ENCODE measurements at regions of chr6 and their contacts with region 1.

Region 1: GRCh38 chr6:83067448-83068413 is at the start of gene DOP1A:
- DNase-seq: peak; percentile 97
- ATAC-seq: peak; percentile 78
- H3K4me3 ChIP-seq: peak within 1 kb of the TSS; percentile 32 to 91 (median 83)
- H3K4me3 Mint-ChIP-seq: peak within 1 kb of the TSS; percentile 98
- H3K27ac ChIP-seq: peak within 1 kb of the TSS; percentile 89 to 94
- H3K27ac Mint-ChIP-seq: peak within 1 kb of the TSS; percentile 95
- H3K4me1 ChIP-seq: peaks cover 35 to 41% of the 10 kb centered on the region in 2 donors
- H3K4me1 Mint-ChIP-seq: peaks cover 52% of the 10 kb centered on the region
- H3K27me3 ChIP-seq: no peaks in the 10 kb centered on the region
- H3K27me3 Mint-ChIP-seq: no peaks in the 10 kb centered on the region
- CTCF ChIP-seq: peak; percentile 97
- total RNA-seq, gene DOP1A: 28.3 and 37.5 TPM in 2 replicates

Region 2: GRCh38 chr6:82247634-82248232 is 820.0 kb before region 1 on chr6 and contains the start of gene IBTK:
- CTCF ChIA-PET with region 1: interaction called, 5 read pairs
- POLR2A ChIA-PET with region 1: no interaction called
- intact Hi-C with region 1: loop called (anchors 5 kb)
- DNase-seq: peak; percentile 92
- ATAC-seq: peak; percentile 88
- H3K4me3 ChIP-seq: peak within 1 kb of the TSS; percentile 59 to 96 (median 88)
- H3K4me3 Mint-ChIP-seq: peak within 1 kb of the TSS; percentile 99
- H3K27ac ChIP-seq: peak within 1 kb of the TSS; percentile 82 to 83
- H3K27ac Mint-ChIP-seq: peak within 1 kb of the TSS; percentile 95
- H3K4me1 ChIP-seq: peaks cover 15 to 20% of the 10 kb centered on the region in 2 donors
- H3K4me1 Mint-ChIP-seq: peaks cover 34% of the 10 kb centered on the region
- H3K27me3 ChIP-seq: no peaks in the 10 kb centered on the region
- H3K27me3 Mint-ChIP-seq: peaks cover under 1% of the 10 kb centered on the region
- CTCF ChIP-seq: no peak
- total RNA-seq, gene IBTK: 27.7 and 28.3 TPM in 2 replicates

Region 3: DNA sequence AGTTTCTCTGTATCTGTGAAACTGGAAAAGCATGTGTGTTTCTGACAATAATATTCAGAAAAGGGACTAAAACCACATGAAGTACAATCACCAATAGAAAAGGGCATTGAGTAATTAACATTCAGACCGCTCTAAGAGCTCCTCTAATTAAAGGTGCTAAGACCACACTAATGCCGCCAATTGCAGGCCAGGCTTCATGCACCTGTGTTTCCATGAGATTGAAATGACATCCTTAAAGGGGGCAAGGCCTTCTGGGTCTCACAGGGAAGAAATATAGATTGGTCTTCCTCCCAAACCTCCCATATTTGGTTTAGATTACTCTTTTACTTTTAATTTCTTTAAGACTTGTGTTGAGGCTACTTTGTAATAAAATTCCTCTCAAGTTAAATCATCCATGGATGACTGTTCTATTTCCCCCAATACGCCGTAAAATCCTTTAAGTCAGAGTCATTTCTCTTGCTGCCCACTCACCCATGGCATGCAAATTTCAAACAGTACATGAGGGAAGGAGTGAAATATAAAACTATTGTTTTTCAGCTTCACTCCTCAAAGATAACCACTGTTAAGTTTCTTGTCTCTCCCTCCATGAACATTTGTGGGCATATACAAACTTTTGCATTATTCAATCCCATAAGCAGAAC is 112.7 kb before region 1 on chr6:
- CTCF ChIA-PET with region 1: no interaction called
- POLR2A ChIA-PET with region 1: no interaction called
- intact Hi-C with region 1: no loop called
- DNase-seq: no peak
- ATAC-seq: no peak
- H3K4me3 ChIP-seq: no peak overlapping the region
- H3K4me3 Mint-ChIP-seq: no peak overlapping the region
- H3K27ac ChIP-seq: no peak overlapping the region
- H3K27ac Mint-ChIP-seq: no peak overlapping the region
- H3K4me1 ChIP-seq: peaks cover 6 to 7% of the 10 kb centered on the region in 2 donors
- H3K4me1 Mint-ChIP-seq: peaks cover 14% of the 10 kb centered on the region
- H3K27me3 ChIP-seq: no peaks in the 10 kb centered on the region
- H3K27me3 Mint-ChIP-seq: no peaks in the 10 kb centered on the region
- CTCF ChIP-seq: no peak

Region 4: DNA sequence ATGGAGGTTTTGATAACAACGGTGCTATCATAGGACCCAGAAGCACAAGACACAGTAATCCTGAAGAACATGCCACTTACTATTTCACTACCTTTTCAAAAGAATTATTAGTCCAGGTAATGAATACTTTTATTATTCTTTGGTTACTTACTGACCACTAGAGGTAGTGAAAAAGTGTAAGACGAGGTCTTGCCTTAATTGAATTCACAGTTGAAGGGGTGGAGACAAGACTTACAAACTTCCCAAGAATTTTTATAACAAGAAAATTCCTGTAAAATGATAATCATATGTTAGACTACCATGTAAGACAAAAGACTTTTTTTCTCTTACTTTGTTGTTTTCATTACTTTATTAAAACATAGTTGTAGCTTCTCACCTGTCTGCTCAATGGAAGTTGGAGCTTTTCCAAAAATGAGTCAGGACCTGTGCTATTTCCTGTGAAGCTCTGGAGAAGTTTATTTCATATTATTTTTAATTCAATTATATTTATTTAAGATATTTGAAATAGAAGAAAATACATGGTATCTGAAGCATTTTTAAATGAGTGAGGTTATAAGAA is 52.1 kb after region 1 on chr6:
- CTCF ChIA-PET with region 1: interaction called, 10 read pairs
- POLR2A ChIA-PET with region 1: no interaction called
- intact Hi-C with region 1: loop called (anchors 5 kb)
- DNase-seq: no peak
- ATAC-seq: no peak
- H3K4me3 ChIP-seq: no peak overlapping the region
- H3K4me3 Mint-ChIP-seq: no peak overlapping the region
- H3K27ac ChIP-seq: no peak overlapping the region
- H3K27ac Mint-ChIP-seq: no peak overlapping the region
- H3K4me1 ChIP-seq: no peaks in the 10 kb centered on the region
- H3K4me1 Mint-ChIP-seq: no peaks in the 10 kb centered on the region
- H3K27me3 ChIP-seq: no peaks in the 10 kb centered on the region
- H3K27me3 Mint-ChIP-seq: no peaks in the 10 kb centered on the region
- CTCF ChIP-seq: no peak

Region 5: GRCh38 chr6:83215131-83216047 is 147.7 kb after region 1 on chr6:
- CTCF ChIA-PET with region 1: interaction called, 103 read pairs
- POLR2A ChIA-PET with region 1: no interaction called
- intact Hi-C with region 1: loop called (anchors 1 kb)
- DNase-seq: peak; percentile 72
- ATAC-seq: peak; percentile 98
- H3K4me3 ChIP-seq: no peak overlapping the region
- H3K4me3 Mint-ChIP-seq: no peak overlapping the region
- H3K27ac ChIP-seq: no peak overlapping the region
- H3K27ac Mint-ChIP-seq: no peak overlapping the region
- H3K4me1 ChIP-seq: no peaks in the 10 kb centered on the region
- H3K4me1 Mint-ChIP-seq: no peaks in the 10 kb centered on the region
- H3K27me3 ChIP-seq: peaks cover 0 to 15% (median 0%) of the 10 kb centered on the region in 4 experiments
- H3K27me3 Mint-ChIP-seq: peaks cover 17% of the 10 kb centered on the region
- CTCF ChIP-seq: peak; percentile 81

Region 6: GRCh38 chr6:83514866-83515466 is 447.2 kb after region 1 on chr6:
- CTCF ChIA-PET with region 1: interaction called, 35 read pairs
- POLR2A ChIA-PET with region 1: no interaction called
- intact Hi-C with region 1: loop called (anchors 2 kb)
- DNase-seq: peak; percentile 40
- ATAC-seq: no peak
- H3K4me3 ChIP-seq: no peak overlapping the region
- H3K4me3 Mint-ChIP-seq: no peak overlapping the region
- H3K27ac ChIP-seq: no peak overlapping the region
- H3K27ac Mint-ChIP-seq: no peak overlapping the region
- H3K4me1 ChIP-seq: peaks cover 9 to 11% of the 10 kb centered on the region in 2 donors
- H3K4me1 Mint-ChIP-seq: peaks cover 13% of the 10 kb centered on the region
- H3K27me3 ChIP-seq: peaks cover 0 to 18% (median 9%) of the 10 kb centered on the region in 4 experiments
- H3K27me3 Mint-ChIP-seq: peaks cover 40% of the 10 kb centered on the region
- CTCF ChIP-seq: peak; percentile 91

Region 7: GRCh38 chr6:84227434-84228197 is 1159.9 kb after region 1 on chr6 and contains the start of gene CEP162:
- CTCF ChIA-PET with region 1: interaction called, 15 read pairs
- POLR2A ChIA-PET with region 1: no interaction called
- intact Hi-C with region 1: loop called (anchors 1 kb)
- DNase-seq: peak; percentile 94
- ATAC-seq: peak; percentile 91
- H3K4me3 ChIP-seq: peak within 1 kb of the TSS; percentile 67 to 99 (median 97)
- H3K4me3 Mint-ChIP-seq: peak within 1 kb of the TSS; percentile 100
- H3K27ac ChIP-seq: peak within 1 kb of the TSS; percentile 30 to 64
- H3K27ac Mint-ChIP-seq: peak within 1 kb of the TSS; percentile 96
- H3K4me1 ChIP-seq: peaks cover 10 to 11% of the 10 kb centered on the region in 2 donors
- H3K4me1 Mint-ChIP-seq: peaks cover 22% of the 10 kb centered on the region
- H3K27me3 ChIP-seq: peaks cover 0 to 19% (median 4%) of the 10 kb centered on the region in 4 experiments
- H3K27me3 Mint-ChIP-seq: peaks cover 14% of the 10 kb centered on the region
- CTCF ChIP-seq: peak; percentile 84
- total RNA-seq, gene CEP162: 13.4 and 15.6 TPM in 2 replicates